ENCODE measurements at regions of chr17 and their contacts with region 1.

Region 1: GRCh38 chr17:1573916-1574696 is 11.5 kb upstream of the PITPNA start:
- DNase-seq: peak in 9 of 10 donors; percentile 71 to 87 (median 80)
- H3K4me3 ChIP-seq: peak overlapping the region in 3 of 59 donors; percentile 7 to 21 (median 14)
- H3K27ac ChIP-seq: peak overlapping the region in 55 of 59 donors; percentile 3 to 93 (median 73)
- H3K27me3 ChIP-seq: no peaks in the 10 kb centered on the region
- CTCF ChIP-seq: peak; percentile 58 to 97 (median 93)

Region 2: DNA sequence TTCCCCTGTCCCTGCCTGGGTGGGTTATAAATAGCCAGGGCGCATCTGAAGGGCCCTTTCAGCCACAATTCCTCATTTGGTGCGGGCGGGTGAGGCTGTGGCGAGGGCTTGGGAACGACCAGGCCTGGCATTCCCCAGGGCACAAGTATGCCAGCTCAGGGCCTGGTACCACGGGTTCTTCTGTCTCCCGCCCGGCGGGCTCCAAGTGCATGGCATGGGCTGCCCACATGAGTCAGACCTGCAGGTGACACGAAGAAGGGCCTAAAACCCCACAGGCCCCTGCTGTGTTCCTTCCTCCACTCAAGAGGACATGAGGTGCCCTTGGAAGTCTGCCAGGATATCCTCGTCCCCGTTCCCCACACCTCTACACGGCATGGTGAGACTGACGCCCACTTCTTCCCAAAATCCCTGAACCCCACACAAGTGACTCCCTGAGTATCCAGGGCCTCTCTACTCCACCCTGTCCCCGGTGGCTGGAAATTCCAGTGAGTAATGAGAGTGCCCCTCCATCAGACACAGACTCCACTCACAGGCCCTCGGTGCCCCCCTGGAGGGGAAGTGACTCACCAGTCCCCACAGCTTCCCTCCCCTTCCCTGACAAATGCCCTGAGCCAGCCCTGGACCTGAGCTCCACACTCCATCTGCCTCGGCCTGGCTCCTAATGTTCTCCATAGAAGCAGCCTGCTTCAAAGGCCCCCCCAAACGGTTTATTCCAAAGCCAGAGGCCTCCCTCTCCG is 463.1 kb before region 1 on chr17:
- intact Hi-C with region 1: no loop called
- DNase-seq: peak in 4 of 10 donors; percentile 51 to 79 (median 65)
- H3K4me3 ChIP-seq: peak overlapping the region in 6 of 59 donors; percentile 10 to 70 (median 42)
- H3K27ac ChIP-seq: peak overlapping the region in 58 of 59 donors; percentile 43 to 94 (median 83)
- H3K27me3 ChIP-seq: peaks cover 0 to 31% (median 0%) of the 10 kb centered on the region in 45 donors
- CTCF ChIP-seq: peak in 1 of 56 donors; percentile 4

Region 3: DNA sequence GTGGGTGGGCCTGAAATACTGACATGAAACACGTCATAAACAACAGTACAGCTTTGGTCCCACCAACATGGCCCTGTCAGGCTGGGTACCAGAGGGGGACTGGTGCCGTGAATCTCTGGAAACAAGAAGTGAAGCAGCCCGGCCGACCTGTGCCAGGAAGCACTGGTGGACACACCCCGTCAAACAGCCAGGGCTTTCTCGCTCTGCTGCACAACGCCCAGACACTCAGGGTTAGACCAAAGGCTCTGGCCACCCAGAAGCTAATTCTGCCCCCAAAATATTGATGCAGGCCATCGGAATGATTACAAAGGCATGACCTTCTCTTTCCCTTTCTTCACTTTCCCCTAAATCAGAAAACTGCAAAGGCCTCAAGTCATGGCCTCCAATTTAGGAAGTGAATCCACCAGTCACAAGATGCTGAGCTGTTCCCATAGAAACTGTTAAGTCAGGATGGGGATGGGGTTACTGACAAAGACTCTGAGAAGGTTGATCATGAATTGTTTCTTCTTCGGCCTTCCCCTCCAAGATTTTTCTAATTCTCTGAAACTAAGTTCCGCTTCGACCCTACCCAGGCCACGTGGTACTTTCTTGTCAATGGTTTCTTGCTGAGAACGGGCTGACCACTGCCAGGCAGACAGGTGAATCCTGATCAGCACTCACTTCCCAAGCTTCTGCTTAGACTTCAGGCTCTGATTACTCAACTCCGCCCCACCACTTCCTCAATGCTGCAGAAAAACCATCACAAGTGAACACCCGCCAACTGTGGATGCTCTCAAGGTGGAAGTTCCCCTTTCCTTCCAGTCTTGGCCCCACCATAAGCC is 18.2 kb before region 1 on chr17:
- intact Hi-C with region 1: no loop called
- DNase-seq: peak in 1 of 10 donors; percentile 40
- H3K4me3 ChIP-seq: no peak overlapping the region
- H3K27ac ChIP-seq: peak overlapping the region in 29 of 59 donors; percentile 3 to 56 (median 31)
- H3K27me3 ChIP-seq: no peaks in the 10 kb centered on the region
- CTCF ChIP-seq: no peak

Region 4: DNA sequence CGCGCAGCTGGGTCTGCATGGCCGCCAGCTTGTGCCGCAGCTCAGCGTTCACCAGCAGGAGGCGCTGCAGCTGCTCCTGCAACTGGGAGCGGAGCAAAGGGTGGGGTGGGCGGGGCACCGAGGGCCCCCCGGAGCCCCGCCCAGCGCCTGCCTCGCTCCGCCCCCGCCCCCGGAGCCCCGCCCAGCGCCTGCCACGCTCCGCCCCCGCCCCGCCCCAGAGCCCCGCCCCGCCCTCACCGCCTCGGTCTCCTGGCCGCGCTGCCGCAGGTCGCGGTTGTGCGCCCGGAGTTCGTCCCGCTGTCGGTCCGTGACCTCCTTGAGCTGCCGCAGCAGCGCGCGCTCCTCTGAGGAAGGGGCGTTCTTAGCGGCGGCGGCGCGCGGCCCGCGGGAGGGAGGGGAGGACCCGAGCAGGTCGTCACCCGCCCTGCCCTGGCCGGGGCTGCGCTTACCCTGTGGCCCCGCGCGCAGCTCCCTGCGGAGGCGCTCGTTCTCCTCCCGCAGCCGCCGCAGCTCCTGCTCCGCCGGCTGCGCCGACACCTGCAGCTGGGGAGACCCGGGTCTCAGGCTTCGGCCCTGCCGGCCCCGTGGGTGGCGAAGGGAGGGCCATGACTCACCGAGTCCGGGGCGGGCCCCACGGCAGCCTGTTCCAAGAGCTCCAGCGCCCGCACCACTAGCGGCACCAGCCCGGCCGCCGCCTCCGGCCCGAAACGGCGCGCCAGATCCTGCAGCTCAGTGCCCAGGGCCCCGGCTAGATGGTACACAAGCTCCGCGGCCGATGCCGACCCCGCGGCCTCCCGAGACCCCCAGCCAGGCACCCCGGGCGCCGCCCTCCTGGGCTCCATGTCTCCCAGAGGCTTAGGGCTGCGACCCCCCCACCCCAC is 75.1 kb after region 1 on chr17:
- intact Hi-C with region 1: loop called (anchors 1 to 5 kb)
- DNase-seq: peak; percentile 90 to 95 (median 92)
- H3K4me3 ChIP-seq: peak overlapping the region; percentile 58 to 92 (median 75)
- H3K27ac ChIP-seq: peak overlapping the region; percentile 59 to 99 (median 94)
- H3K27me3 ChIP-seq: no peaks in the 10 kb centered on the region
- CTCF ChIP-seq: peak in 52 of 56 donors; percentile 63 to 97 (median 81)

Region 5: DNA sequence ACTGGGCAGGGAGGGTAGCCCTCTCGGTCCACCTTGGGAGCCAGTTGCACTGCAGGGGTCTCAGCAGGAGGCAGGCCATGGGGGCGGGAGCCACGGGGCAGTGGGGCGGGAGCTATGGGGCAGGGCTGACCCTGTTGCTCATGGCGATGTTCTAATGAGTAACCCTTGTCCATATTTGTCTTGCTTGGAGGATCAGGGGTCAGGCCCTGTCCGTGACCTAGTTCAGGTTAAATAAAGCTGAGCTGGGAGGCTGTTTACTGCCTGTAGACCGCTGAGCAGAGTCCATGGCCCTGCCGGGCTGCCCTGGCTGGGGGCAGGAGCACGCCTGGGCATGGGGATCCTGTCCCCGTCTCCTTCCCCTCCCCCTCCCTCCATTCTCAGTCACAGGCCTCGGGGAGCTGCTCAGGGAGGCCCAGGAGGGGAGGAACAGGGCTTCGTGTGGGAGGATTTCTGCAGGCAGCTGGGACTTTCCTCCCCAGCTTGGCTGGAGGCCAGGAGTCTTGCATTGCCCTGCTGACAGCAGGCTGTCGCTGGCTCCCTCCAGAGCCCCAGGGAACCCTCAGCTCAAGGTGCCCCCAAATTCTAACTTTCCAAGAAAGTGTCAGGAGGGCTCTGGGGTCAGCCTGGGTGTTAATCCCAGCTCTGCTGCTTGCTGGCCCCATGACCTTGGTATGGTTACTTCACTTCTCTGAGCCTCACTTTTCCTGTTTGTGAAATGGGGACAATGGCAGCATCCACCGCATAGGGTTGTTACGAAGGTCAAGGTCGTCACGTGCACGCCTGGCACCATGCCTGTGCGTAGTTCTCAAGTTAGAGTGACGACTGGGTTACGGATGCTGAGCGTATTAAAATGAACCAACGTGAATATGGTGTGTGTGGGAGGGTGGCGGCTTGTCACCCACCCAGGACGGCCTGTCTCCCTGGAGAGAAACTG is 162.5 kb after region 1 on chr17:
- intact Hi-C with region 1: no loop called
- DNase-seq: peak in 5 of 10 donors; percentile 52 to 81 (median 67)
- H3K4me3 ChIP-seq: no peak overlapping the region
- H3K27ac ChIP-seq: peak overlapping the region in 7 of 59 donors; percentile 1 to 51 (median 5)
- H3K27me3 ChIP-seq: no peaks in the 10 kb centered on the region
- CTCF ChIP-seq: no peak

Region 6: DNA sequence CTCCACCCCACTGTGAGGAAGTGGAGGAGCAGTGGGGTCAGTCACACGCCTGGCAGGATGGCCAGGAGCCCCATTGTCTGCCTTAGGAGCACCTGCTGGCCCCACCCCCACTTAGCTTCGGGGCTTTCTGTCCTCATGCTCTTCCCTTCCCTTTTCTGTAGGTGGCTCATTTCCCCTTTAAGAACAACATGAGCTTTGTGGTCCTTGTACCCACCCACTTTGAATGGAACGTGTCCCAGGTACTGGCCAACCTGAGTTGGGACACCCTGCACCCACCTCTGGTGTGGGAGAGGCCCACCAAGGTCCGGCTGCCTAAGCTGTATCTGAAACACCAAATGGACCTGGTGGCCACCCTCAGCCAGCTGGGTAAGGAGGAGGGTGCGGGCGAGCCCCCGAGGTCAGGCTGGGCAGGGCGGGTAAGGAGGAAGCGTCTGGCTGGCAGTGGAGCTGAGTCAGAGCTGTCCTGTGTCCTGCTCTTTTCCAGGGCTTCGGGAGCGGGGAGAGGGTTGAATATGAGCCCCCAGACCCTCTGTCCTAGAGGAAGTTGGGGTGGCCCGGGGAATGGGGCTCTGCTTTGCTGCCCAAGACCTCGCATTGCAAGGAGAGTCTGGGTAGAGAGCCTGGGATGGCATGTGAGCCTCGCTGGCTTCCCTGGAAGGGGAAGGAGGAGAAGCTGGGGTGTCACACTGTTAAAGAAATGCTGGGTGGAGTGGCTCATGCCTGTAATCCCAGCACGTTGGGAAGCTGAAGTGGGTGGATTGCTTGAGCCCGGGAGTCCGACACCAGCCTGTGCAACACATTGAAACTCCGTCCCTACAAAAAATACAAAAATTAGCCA is 178.5 kb after region 1 on chr17:
- intact Hi-C with region 1: no loop called
- DNase-seq: no peak
- H3K4me3 ChIP-seq: peak overlapping the region in 7 of 59 donors; percentile 2 to 35 (median 20)
- H3K27ac ChIP-seq: peak overlapping the region in 14 of 59 donors; percentile 8 to 53 (median 26)
- H3K27me3 ChIP-seq: no peaks in the 10 kb centered on the region
- CTCF ChIP-seq: no peak

Measured in dorsolateral prefrontal cortex (tissue), 120 donors.